Colonic mucosa (tissue), 4 donors: ENCODE measurements at regions of chr1 and their contacts with region 1.

Region 1: GRCh38 chr1:2381741-2382620 is 9.4 kb downstream of the MORN1 start:
- DNase-seq: peak; percentile 76
- H3K4me3 ChIP-seq: no peak overlapping the region
- H3K27ac ChIP-seq: no peak overlapping the region
- H3K4me1 ChIP-seq: no peaks in the 10 kb centered on the region
- H3K27me3 ChIP-seq: no peaks in the 10 kb centered on the region
- CTCF ChIP-seq: peak; percentile 82

Region 2: DNA sequence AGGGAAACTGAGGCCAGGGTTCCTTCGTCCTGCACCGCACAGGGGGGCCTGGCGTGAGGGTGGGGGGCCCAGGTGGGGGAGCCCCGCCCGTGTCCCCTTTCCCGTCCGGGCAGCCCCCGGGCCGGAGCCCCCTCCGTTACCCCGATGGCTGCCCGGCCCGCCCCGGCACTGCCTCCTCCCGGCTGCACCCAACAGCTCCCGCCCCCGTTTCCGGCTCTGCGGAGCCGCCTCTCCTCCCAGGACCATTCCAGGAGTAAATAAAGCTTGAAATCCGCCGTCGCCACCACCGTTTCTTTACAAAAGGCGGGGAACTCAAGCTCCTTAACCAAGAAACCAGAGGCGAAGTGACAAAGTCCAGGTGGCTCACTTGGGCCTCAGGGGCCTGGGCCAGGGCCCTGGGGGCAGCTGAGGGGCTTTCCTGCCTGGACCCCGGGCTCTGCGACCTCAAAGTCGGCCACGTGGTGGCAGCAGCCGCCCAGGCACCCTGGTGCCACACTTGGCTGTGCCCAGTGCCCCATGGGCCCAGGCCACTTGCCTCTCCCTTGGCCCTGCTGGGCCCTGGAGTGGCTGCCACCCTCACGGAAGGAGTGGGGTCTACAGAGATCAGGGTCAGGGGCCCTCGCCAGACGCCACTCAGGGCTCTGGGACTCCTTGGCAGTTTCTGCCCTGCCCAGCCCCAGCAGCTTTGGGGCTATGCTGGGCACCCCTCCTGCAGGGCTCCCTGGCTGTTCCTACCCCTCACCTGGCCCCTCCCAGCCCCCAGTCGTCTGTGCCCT is 186.9 kb before region 1 on chr1:
- intact Hi-C with region 1: loop called (anchors 1 kb)
- DNase-seq: peak; percentile 93
- H3K4me3 ChIP-seq: peak overlapping the region; percentile 56
- H3K27ac ChIP-seq: peak overlapping the region; percentile 98
- H3K4me1 ChIP-seq: peaks cover 31% of the 10 kb centered on the region
- H3K27me3 ChIP-seq: no peaks in the 10 kb centered on the region
- CTCF ChIP-seq: peak; percentile 97